Activated CD8-positive, alpha-beta memory T cell treated with anti-CD3 and anti-CD28 coated beads, Interleukin-2, amount 10 ng/mL, durations not matched to agents 7 days and 5 days (primary cell): ENCODE measurements at regions of chr17 and their contacts with region 1.

Region 1: GRCh38 chr17:52106638-52107261 is 51.8 kb downstream of the CA10 start:
- DNase-seq: peak; percentile 44
- ATAC-seq: no peak
- H3K4me3 Mint-ChIP-seq: no peak overlapping the region
- H3K27ac Mint-ChIP-seq: no peak overlapping the region
- H3K4me1 Mint-ChIP-seq: no peaks in the 10 kb centered on the region
- H3K27me3 Mint-ChIP-seq: no peaks in the 10 kb centered on the region

Region 2: DNA sequence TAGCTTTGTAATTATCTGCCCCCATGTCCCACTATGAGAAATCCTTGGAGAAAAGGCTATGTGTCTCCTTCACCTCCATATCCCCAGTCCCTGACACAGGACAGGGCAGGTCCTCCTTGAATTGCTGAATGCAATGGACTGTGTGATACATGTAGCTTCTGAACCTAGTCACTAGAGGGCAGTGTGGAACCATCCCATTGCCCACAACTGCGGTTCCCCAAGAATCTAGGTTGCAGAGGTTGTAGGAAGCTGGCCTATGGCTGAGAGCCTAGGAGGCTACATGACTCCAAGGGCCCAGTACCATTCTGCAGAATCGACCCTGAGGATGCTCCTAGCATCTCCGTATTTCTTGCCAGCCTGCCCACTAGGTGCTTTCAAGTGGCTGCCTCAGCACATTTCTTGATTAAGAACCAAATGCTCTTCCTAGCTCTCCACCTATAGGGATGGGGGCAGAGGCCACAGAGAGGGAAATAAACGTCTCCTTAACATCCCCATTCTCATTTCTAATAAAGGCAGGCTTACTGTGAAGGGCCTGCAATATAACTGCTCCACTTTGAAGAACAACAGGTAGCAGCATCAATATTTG is 342.3 kb before region 1 on chr17:
- CTCF ChIA-PET with region 1: interaction called, 14 read pairs
- DNase-seq: peak; percentile 64
- ATAC-seq: peak; percentile 83
- H3K4me3 Mint-ChIP-seq: no peak overlapping the region
- H3K27ac Mint-ChIP-seq: no peak overlapping the region
- H3K4me1 Mint-ChIP-seq: no peaks in the 10 kb centered on the region
- H3K27me3 Mint-ChIP-seq: peaks cover 2% of the 10 kb centered on the region